PC-3 (cell line): ENCODE measurements at regions of chr10 and their contacts with region 1.

Region 1: GRCh38 chr10:21495752-21496342 is 29.6 kb downstream of the SKIDA1 start:
- DNase-seq: peak; percentile 89
- ATAC-seq: peak; percentile 63
- H3K4me3 ChIP-seq: peak overlapping the region; percentile 93
- H3K27ac ChIP-seq: peak overlapping the region; percentile 21; the same call in 1 of the 2 replicates
- H3K4me1 ChIP-seq: no peaks in the 10 kb centered on the region; the same call in 1 of the 2 replicates
- H3K27me3 ChIP-seq: no peaks in the 10 kb centered on the region
- CTCF ChIP-seq: peak; percentile 84

Region 2: GRCh38 chr10:21078410-21079329 is 417.2 kb before region 1 on chr10:
- CTCF ChIA-PET with region 1: interaction called, 3 read pairs
- POLR2A ChIA-PET with region 1: interaction called, 3 read pairs
- intact Hi-C with region 1: loop called (anchors 10 kb)
- DNase-seq: peak; percentile 77
- ATAC-seq: peak; percentile 75
- H3K4me3 ChIP-seq: no peak overlapping the region
- H3K27ac ChIP-seq: no peak overlapping the region
- H3K4me1 ChIP-seq: peaks cover 18% of the 10 kb centered on the region
- H3K27me3 ChIP-seq: no peaks in the 10 kb centered on the region
- CTCF ChIP-seq: peak; percentile 82

Region 3: DNA sequence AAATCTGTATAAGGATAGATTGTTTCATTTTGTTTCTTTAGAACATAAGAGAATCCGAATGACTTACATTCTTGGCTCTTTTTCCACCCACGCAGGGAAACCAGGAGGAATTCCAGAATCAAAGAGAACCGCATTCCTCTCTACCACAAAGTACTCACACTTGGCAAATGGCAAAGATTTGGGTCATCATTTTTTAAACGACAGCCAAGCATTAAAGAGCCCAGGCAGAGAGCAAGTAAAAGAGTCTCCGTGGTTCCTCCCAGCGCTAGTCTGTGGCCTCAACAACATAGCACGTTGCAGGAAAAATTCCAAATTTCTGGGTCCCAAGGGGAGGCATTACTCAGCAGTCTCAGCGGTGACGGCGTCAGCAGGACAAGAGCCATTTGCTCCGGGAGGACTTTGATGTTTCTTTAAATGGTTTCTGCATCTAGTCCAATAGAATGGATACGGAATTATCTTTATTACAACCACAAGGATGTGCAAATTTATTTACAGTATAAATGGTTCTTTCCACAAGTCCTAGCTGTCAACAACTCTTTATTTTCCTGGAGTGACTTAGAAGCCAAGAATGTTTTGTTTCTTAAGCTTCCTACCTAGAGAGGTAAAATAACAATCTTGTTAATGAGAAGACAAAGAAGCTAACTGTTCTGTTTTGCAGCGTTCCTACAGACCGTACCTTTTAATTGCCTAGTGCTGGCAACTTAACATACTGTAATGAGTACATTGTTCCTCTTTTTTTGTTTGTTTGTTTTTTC is 202.9 kb before region 1 on chr10:
- CTCF ChIA-PET with region 1: no interaction called
- POLR2A ChIA-PET with region 1: no interaction called
- intact Hi-C with region 1: loop called (anchors 5 kb)
- DNase-seq: peak; percentile 92
- ATAC-seq: peak; percentile 89
- H3K4me3 ChIP-seq: peak overlapping the region; percentile 60
- H3K27ac ChIP-seq: peak overlapping the region; percentile 55
- H3K4me1 ChIP-seq: peaks cover 14% of the 10 kb centered on the region
- H3K27me3 ChIP-seq: no peaks in the 10 kb centered on the region
- CTCF ChIP-seq: no peak

Region 4: GRCh38 chr10:21517134-21518031 is 21.5 kb after region 1 on chr10:
- CTCF ChIA-PET with region 1: interaction called, 14 read pairs
- POLR2A ChIA-PET with region 1: interaction called, 3 read pairs
- intact Hi-C with region 1: no loop called
- DNase-seq: peak; percentile 66
- ATAC-seq: peak; percentile 72
- H3K4me3 ChIP-seq: peak overlapping the region; percentile 86
- H3K27ac ChIP-seq: no peak overlapping the region
- H3K4me1 ChIP-seq: peaks cover 17% of the 10 kb centered on the region
- H3K27me3 ChIP-seq: no peaks in the 10 kb centered on the region
- CTCF ChIP-seq: no peak

Region 5: DNA sequence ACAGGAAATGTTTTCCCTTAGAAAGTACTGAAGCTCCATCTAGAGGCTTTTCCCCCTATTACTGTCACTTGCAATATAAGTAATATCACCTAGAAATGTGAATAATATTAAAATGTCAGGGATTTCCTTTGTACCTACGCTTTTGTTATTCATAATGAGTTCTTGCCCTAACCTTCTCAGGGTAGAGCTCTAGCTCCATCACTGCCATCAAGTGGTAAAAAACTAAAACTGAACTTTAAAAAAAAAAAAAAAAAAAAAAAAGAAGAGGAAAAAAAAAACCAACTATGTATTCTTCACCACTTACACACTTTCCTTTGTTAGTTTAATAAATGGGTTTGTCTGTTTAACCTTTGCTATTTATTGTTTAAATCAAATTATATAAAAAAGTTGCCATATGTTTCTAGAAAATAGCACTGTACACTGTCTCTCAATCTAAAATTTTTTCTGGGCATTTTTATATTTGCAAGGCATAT is 457.8 kb after region 1 on chr10:
- CTCF ChIA-PET with region 1: no interaction called
- POLR2A ChIA-PET with region 1: no interaction called
- intact Hi-C with region 1: loop called (anchors 2 kb)
- DNase-seq: peak; percentile 43
- ATAC-seq: peak; percentile 55
- H3K4me3 ChIP-seq: no peak overlapping the region
- H3K27ac ChIP-seq: no peak overlapping the region
- H3K4me1 ChIP-seq: no peaks in the 10 kb centered on the region
- H3K27me3 ChIP-seq: no peaks in the 10 kb centered on the region
- CTCF ChIP-seq: peak; percentile 50